Activated naive CD4-positive, alpha-beta T cell treated with anti-CD3 and anti-CD28 coated beads for 36 hours (primary cell): ENCODE measurements at regions of chr2 and their contacts with region 1.

Region 1: DNA sequence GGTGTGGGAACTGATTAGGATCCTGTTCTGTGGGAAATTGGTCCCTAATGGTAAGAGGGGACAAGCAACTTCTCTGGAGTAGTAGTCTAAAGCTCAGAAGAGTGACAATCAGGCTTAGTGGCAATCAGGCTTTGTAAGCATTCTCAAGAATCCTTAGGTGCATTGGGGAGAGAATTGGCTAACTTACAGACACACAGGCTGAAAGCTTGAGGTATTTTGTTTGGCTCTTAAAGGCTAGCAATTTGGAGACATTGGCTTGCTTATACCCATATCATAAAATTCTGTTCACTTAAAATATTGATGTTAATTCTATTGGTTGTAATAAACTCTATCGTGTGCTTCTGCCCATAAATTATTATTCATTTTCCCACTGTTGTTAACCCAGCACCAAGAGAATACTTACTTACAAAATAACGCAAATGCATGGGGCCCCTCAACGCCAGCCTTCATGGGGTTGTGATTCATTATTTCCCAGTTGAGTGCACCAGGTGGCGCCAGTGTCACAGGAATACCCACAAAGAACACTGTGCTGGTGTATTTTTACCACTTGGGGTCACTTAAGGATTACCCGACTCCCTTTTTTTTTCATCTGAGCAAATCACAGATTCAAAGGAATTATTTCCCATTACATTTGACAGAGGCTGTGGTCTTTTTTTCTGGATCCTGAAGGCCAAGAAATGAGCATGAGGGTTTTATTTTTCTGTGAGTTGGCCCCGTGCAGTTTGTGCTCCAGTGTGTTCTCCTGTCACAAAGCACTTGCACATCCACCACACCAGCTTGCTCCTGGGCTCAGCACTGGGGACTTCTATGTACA is 45.5 kb downstream of the DDX1 start:
- DNase-seq: peak; percentile 81
- H3K4me3 Mint-ChIP-seq: no peak overlapping the region
- H3K27ac Mint-ChIP-seq: no peak overlapping the region
- H3K4me1 Mint-ChIP-seq: peaks cover 6% of the 10 kb centered on the region
- H3K27me3 Mint-ChIP-seq: no peaks in the 10 kb centered on the region

Region 2: GRCh38 chr2:15760232-15760910 is 123.2 kb after region 1 on chr2:
- CTCF ChIA-PET with region 1: interaction called, 10 read pairs
- intact Hi-C with region 1: no loop called
- DNase-seq: no peak
- H3K4me3 Mint-ChIP-seq: no peak overlapping the region
- H3K27ac Mint-ChIP-seq: no peak overlapping the region
- H3K4me1 Mint-ChIP-seq: no peaks in the 10 kb centered on the region
- H3K27me3 Mint-ChIP-seq: no peaks in the 10 kb centered on the region

Region 3: DNA sequence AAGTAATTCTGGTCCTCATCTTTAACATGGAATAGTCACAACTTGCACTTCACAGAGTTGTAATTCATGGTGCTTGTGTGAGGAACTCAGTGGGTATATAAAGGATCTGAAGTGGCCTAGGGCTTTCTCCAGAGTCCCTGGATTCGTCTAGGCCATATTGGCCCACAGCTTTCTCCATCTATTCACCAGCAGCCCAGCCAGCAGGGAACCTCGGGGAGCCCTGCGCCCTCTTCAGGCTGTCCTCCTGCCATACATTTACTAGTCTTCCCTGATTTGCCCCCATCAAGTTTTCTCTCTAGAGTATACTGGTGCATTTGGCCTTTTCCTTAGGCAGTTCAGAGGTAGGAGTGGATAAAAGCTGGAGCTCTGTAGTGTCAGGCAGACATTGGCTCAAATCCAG is 581.4 kb after region 1 on chr2:
- CTCF ChIA-PET with region 1: no interaction called
- intact Hi-C with region 1: loop called (anchors 1 kb)
- DNase-seq: peak; percentile 30
- H3K4me3 Mint-ChIP-seq: no peak overlapping the region
- H3K27ac Mint-ChIP-seq: no peak overlapping the region
- H3K4me1 Mint-ChIP-seq: no peaks in the 10 kb centered on the region
- H3K27me3 Mint-ChIP-seq: no peaks in the 10 kb centered on the region

Region 4: GRCh38 chr2:16487686-16488085 is 850.5 kb after region 1 on chr2:
- CTCF ChIA-PET with region 1: no interaction called
- intact Hi-C with region 1: loop called (anchors 5 kb)
- DNase-seq: no peak
- H3K4me3 Mint-ChIP-seq: no peak overlapping the region
- H3K27ac Mint-ChIP-seq: no peak overlapping the region
- H3K4me1 Mint-ChIP-seq: no peaks in the 10 kb centered on the region
- H3K27me3 Mint-ChIP-seq: peaks cover 19% of the 10 kb centered on the region

Region 5: GRCh38 chr2:16608661-16609643 is 971.8 kb after region 1 on chr2:
- CTCF ChIA-PET with region 1: no interaction called
- intact Hi-C with region 1: loop called (anchors 1 kb)
- DNase-seq: peak; percentile 93
- H3K4me3 Mint-ChIP-seq: peak overlapping the region; percentile 78
- H3K27ac Mint-ChIP-seq: no peak overlapping the region
- H3K4me1 Mint-ChIP-seq: no peaks in the 10 kb centered on the region
- H3K27me3 Mint-ChIP-seq: peaks cover 9% of the 10 kb centered on the region